Activated CD4-positive, alpha-beta memory T cell treated with anti-CD3 and anti-CD28 coated beads for 36 hours (primary cell): ENCODE measurements at regions of chr22 and their contacts with region 1.

Region 1: GRCh38 chr22:23622634-23623033 is 9.5 kb downstream of the DRICH1 start:
- DNase-seq: no peak
- H3K4me3 Mint-ChIP-seq: no peak overlapping the region
- H3K27ac Mint-ChIP-seq: no peak overlapping the region
- H3K4me1 Mint-ChIP-seq: no peaks in the 10 kb centered on the region
- H3K27me3 Mint-ChIP-seq: no peaks in the 10 kb centered on the region

Region 2: DNA sequence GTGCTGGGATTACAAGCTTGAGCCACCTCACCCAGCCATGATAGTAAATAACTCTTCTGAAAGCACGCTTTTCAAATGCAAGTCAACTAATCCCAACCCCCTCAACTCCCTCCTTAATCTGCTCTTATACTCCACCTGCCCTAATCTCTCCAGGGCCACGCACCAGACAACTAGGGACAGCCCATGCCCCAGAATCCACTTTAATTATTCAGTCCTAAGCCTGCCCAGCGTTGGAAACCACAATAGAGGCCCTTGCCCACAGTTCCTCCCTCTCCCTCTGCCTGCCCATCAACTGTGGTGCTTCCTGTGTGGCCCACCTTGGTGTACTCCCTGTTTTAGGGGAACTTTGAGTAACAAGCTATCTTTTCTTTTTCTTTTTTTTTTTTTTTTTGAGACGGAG is 134.3 kb after region 1 on chr22:
- CTCF ChIA-PET with region 1: no interaction called
- POLR2A ChIA-PET with region 1: no interaction called
- intact Hi-C with region 1: no loop called
- DNase-seq: no peak
- H3K4me3 Mint-ChIP-seq: no peak overlapping the region
- H3K27ac Mint-ChIP-seq: no peak overlapping the region
- H3K4me1 Mint-ChIP-seq: no peaks in the 10 kb centered on the region
- H3K27me3 Mint-ChIP-seq: no peaks in the 10 kb centered on the region

Region 3: GRCh38 chr22:23767673-23768548 is 145.3 kb after region 1 on chr22 and contains the start of gene CHCHD10:
- CTCF ChIA-PET with region 1: no interaction called
- POLR2A ChIA-PET with region 1: no interaction called
- intact Hi-C with region 1: loop called (anchors 1 kb)
- DNase-seq: peak; percentile 84
- H3K4me3 Mint-ChIP-seq: peak within 1 kb of the TSS; percentile 76
- H3K27ac Mint-ChIP-seq: peak within 1 kb of the TSS; percentile 42
- H3K4me1 Mint-ChIP-seq: peaks cover 40% of the 10 kb centered on the region
- H3K27me3 Mint-ChIP-seq: no peaks in the 10 kb centered on the region
- total RNA-seq, gene CHCHD10: 144 to 157 TPM

Region 4: DNA sequence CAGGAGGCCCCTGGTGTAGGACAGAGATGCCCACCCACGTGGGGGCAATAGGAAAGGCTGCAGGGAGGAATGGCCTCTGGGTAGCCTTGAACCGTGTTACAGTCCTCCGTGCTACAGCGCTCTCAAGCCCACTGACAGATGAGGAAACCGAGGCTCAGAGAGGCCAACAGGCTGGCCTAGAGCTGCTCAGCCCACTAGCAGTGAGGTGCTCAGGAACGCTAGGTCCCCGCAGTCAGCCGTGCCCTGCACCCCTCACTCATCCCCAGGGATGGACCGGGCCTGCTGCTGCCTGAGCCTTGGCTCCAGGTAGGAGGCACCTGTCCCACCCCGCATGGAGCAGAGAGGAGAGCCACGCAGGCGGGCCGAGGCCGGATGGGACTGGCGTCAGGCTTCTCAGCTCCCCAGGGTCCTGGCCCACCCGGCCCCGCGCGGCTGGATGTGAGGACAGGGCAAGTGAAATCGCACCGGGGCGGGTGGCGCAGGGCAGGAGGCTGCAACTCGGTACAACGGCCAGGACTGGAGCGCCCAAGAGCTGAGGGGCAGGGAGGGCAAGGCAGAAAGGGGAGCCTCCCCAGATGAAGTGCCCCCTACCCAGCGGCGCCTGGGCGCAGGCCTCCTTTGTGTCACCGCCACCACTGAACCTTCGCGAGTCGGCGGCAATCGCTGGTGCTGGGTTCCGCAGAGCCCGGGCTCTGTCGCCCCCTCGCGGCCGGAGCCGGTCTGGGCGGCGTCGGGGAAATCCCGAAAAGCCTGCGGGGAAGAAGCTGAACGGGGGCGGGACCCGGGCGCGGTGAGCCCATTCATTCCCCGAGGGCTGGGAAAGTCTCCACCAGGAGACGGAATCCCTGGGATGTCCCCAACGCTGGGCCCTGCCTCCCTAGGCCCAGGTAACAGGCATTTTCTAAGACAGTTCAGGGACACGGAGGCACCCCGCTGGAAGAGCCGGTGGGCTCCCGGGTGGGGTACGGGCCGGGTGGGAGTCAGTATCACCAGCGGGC is 226.7 kb after region 1 on chr22:
- CTCF ChIA-PET with region 1: interaction called, 6 read pairs
- POLR2A ChIA-PET with region 1: no interaction called
- intact Hi-C with region 1: loop called (anchors 5 kb)
- DNase-seq: peak; percentile 91
- H3K4me3 Mint-ChIP-seq: no peak overlapping the region
- H3K27ac Mint-ChIP-seq: no peak overlapping the region
- H3K4me1 Mint-ChIP-seq: peaks cover 7% of the 10 kb centered on the region
- H3K27me3 Mint-ChIP-seq: peaks cover 2% of the 10 kb centered on the region